Activated B cell treated with CpG ODN at 0.5 μM for 24 hours (primary cell): ENCODE measurements at regions of chr15 and their contacts with region 1.

Region 1: GRCh38 chr15:65207280-65207840 is 3.9 kb downstream of the CILP start:
- DNase-seq: no peak
- ATAC-seq: no peak
- H3K4me3 Mint-ChIP-seq: no peak overlapping the region
- H3K27ac Mint-ChIP-seq: no peak overlapping the region
- H3K4me1 Mint-ChIP-seq: no peaks in the 10 kb centered on the region
- H3K27me3 Mint-ChIP-seq: peaks cover 4% of the 10 kb centered on the region
- CTCF ChIP-seq: no peak

Region 2: GRCh38 chr15:65192016-65192415 is 15.3 kb before region 1 on chr15:
- CTCF ChIA-PET with region 1: no interaction called
- POLR2A ChIA-PET with region 1: no interaction called
- intact Hi-C with region 1: no loop called
- DNase-seq: no peak
- ATAC-seq: no peak
- H3K4me3 Mint-ChIP-seq: no peak overlapping the region
- H3K27ac Mint-ChIP-seq: no peak overlapping the region
- H3K4me1 Mint-ChIP-seq: no peaks in the 10 kb centered on the region
- H3K27me3 Mint-ChIP-seq: no peaks in the 10 kb centered on the region
- CTCF ChIP-seq: no peak

Region 3: DNA sequence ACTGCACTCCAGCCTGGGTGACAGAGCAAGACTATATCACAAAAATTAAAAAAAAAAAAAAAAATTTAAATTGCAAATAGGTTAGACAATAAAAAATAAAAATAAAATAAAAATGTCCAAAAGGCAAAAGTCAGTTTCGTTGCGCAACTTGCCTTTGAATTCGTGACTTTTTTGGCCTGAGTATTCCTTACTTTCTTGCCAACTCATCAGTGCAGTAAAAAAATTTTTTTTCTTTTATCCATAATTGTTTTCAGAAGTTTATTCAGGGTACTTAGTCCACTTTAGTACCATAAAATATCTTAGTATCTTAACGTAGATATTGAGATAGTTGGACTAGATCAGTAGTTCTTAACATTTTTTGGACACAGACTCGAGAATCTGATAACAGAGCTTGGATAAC is 26.3 kb after region 1 on chr15:
- CTCF ChIA-PET with region 1: no interaction called
- POLR2A ChIA-PET with region 1: no interaction called
- intact Hi-C with region 1: loop called (anchors 1 kb)
- DNase-seq: no peak
- ATAC-seq: no peak
- H3K4me3 Mint-ChIP-seq: no peak overlapping the region
- H3K27ac Mint-ChIP-seq: no peak overlapping the region
- H3K4me1 Mint-ChIP-seq: no peaks in the 10 kb centered on the region
- H3K27me3 Mint-ChIP-seq: no peaks in the 10 kb centered on the region
- CTCF ChIP-seq: no peak